ENCODE measurements at regions of chr19 and their contacts with region 1.

Region 1: DNA sequence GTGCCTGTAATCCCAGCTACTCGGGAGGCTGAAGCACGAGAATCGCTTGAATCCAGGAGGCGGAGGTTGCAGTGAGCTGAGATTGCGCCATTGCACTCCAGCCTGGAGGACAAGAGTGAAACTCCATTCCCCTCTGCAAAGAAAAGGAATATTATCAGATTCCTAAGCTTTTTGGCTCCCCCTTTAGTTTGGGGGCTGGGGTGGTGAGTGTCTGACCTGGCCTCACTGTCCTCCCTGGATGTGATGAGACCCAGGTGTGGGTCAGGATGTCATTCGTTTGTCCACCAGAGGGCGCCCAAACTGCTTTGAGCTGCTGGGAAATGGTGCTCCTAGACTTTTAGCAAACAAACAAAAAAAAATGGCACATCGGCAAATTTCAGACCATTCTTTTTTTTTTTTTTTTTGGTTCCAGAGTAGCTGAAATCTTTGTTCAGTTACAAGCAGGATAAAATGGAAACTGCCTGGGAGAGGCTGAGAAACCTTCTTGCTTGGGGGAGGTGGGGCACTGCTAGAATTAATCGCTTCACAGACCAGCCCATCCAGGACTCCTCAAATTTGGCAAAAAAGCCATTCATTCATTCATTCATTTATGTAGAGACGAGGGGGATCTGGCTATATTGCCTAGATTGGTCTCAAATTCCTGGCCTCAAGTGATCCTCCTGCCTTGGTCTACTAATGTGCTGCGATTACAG is 29.4 kb downstream of the SPC24 start:
- DNase-seq: peak; percentile 64 to 72
- H3K4me3 ChIP-seq: no peak overlapping the region
- H3K27ac ChIP-seq: no peak overlapping the region
- H3K4me1 ChIP-seq: no peaks in the 10 kb centered on the region
- H3K27me3 ChIP-seq: no peaks in the 10 kb centered on the region
- CTCF ChIP-seq: peak; percentile 88

Region 2: DNA sequence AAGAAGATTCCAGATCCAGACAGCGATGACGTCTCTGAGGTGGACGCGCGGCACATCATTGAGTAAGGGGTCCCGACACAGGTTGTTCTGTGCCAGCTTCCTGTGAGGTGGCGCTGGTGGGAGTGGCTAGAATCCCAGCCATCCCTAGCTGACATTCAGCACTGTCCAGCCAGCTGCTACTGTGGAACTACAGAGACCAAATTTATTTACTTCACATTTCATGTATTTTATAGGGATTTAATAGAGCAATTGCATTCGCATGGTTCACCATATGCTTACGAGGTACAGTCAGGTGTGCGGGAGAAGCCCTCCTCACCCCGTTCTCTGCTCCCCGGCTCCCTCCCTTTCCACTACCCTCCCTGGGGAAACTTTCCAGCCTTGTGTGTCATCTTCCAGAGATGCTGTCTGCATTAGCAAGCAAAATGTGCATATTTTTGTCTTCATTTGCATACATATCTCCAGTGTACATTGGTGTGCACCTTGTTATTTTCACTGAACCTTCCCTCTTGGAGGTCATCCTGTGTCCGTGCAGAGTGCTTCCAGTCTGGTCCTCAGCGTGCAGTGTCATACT is 118.1 kb before region 1 on chr19:
- CTCF ChIA-PET with region 1: interaction called, 18 read pairs
- POLR2A ChIA-PET with region 1: no interaction called
- intact Hi-C with region 1: no loop called
- DNase-seq: no peak
- H3K4me3 ChIP-seq: no peak overlapping the region
- H3K27ac ChIP-seq: no peak overlapping the region
- H3K4me1 ChIP-seq: no peaks in the 10 kb centered on the region
- H3K27me3 ChIP-seq: no peaks in the 10 kb centered on the region
- CTCF ChIP-seq: no peak

Region 3: GRCh38 chr19:11111117-11111774 is 14.9 kb before region 1 on chr19:
- CTCF ChIA-PET with region 1: no interaction called
- POLR2A ChIA-PET with region 1: no interaction called
- intact Hi-C with region 1: no loop called
- DNase-seq: no peak
- H3K4me3 ChIP-seq: no peak overlapping the region
- H3K27ac ChIP-seq: no peak overlapping the region
- H3K4me1 ChIP-seq: no peaks in the 10 kb centered on the region
- H3K27me3 ChIP-seq: no peaks in the 10 kb centered on the region
- CTCF ChIP-seq: no peak

Measured in PC-9 (cell line).